ENCODE measurements at regions of chr1 and their contacts with region 1.

Region 1: GRCh38 chr1:26284597-26285360 is 4.9 kb downstream of the SH3BGRL3 start:
- DNase-seq: peak; percentile 99 to 100 (median 99)
- H3K4me3 ChIP-seq: peak overlapping the region in 3 of 7 experiments; percentile 7 to 19 (median 10)
- H3K27ac ChIP-seq: peak overlapping the region; percentile 91 to 92
- H3K4me1 ChIP-seq: peaks cover 19 to 98% (median 96%) of the 10 kb centered on the region in 4 experiments
- H3K27me3 ChIP-seq: no peaks in the 10 kb centered on the region

Region 2: DNA sequence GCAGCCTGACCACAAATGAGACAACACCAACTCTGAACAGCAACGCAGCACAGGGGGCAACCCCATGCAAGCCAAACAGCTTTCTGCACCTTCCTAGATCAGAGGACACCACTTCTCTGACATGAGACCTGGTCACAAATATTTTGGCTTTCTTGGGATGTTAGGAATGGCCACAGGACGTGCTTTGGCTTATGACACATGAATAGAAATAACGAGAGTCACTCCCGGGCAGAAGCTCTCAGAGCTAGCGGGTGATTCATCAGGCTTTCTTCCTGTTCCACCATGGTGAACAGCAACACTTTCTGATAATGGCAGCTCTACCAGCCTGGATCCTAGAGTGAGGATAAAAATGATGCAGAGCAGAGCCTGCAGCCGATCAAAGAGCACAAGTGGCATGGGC is 326.3 kb before region 1 on chr1:
- CTCF ChIA-PET with region 1: no interaction called
- POLR2A ChIA-PET with region 1: no interaction called
- DNase-seq: no peak
- H3K4me3 ChIP-seq: no peak overlapping the region
- H3K27ac ChIP-seq: no peak overlapping the region
- H3K4me1 ChIP-seq: peaks cover 0 to 4% (median 0%) of the 10 kb centered on the region in 4 experiments
- H3K27me3 ChIP-seq: no peaks in the 10 kb centered on the region

Region 3: GRCh38 chr1:26126321-26127084 is 158.3 kb before region 1 on chr1:
- CTCF ChIA-PET with region 1: no interaction called
- POLR2A ChIA-PET with region 1: no interaction called
- DNase-seq: peak; percentile 92 to 99 (median 97)
- H3K4me3 ChIP-seq: peak overlapping the region in 5 of 7 experiments; percentile 27 to 71 (median 48)
- H3K27ac ChIP-seq: peak overlapping the region; percentile 93 to 97
- H3K4me1 ChIP-seq: peaks cover 45 to 83% (median 64%) of the 10 kb centered on the region in 4 experiments
- H3K27me3 ChIP-seq: no peaks in the 10 kb centered on the region

Region 4: GRCh38 chr1:26164036-26164860 is 120.5 kb before region 1 on chr1:
- CTCF ChIA-PET with region 1: no interaction called
- POLR2A ChIA-PET with region 1: no interaction called
- DNase-seq: peak; percentile 40 to 55 (median 54)
- H3K4me3 ChIP-seq: peak overlapping the region in 6 of 7 experiments; percentile 31 to 71 (median 50)
- H3K27ac ChIP-seq: no peak overlapping the region
- H3K4me1 ChIP-seq: peaks cover 0 to 43% (median 28%) of the 10 kb centered on the region in 4 experiments
- H3K27me3 ChIP-seq: peaks cover 0 to 22% (median 11%) of the 10 kb centered on the region in 5 experiments

Region 5: GRCh38 chr1:26254404-26254803 is 30.4 kb before region 1 on chr1:
- CTCF ChIA-PET with region 1: no interaction called
- POLR2A ChIA-PET with region 1: no interaction called
- DNase-seq: no peak
- H3K4me3 ChIP-seq: no peak overlapping the region
- H3K27ac ChIP-seq: peak overlapping the region in 1 of 2 experiments; percentile 17
- H3K4me1 ChIP-seq: peaks cover under 1 to 7% (median 4%) of the 10 kb centered on the region in 4 experiments
- H3K27me3 ChIP-seq: no peaks in the 10 kb centered on the region

Region 6: DNA sequence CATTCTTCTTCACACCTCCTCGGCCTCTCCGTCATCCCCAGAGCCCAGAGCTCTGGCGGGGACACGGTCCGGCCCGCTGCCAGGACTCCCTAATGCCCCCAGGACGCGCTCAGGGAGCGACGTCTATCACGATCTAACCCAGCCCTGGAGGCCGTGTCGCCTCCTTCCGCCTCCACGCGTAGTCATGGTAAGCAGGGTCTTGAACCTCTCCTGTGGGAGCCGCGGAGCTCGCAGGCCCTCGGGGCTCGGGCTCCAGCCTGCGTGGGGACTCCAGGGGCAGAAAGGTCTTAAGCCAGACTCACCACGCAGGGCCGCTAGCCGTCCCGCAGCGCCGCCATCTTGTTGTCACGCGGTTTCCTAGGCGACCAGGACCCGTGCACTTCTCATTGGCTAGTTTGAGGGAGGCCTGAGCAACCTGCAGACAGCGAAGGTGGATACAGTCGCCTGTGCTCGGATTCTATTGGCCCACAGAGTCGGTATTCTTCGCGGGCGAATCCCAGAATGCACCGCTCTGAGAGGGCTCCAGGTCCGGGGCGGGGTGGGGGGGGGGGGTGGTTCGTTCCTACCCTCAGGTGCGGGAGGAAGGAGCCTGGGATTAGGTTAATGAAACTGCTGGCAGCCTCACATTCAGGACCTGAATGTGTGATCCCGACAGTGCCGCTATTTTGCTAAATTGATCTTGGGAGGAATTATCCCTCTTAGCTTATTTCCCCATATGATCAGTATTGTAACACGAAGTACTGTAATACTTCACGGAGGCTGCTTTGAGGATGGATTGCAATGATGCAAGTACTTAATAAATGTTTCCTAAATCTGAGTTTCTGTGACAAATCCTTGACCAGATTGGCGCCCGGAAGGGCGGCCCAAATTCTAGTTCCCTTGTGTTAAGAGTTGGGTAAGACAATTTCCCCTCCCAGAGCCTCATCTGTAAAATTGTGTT is 21.8 kb after region 1 on chr1 and contains the start of gene UBXN11:
- CTCF ChIA-PET with region 1: interaction called, 26 read pairs
- POLR2A ChIA-PET with region 1: interaction called, 4 read pairs
- DNase-seq: peak; percentile 94 to 97 (median 96)
- H3K4me3 ChIP-seq: peak within 1 kb of the TSS; percentile 69 to 98 (median 90)
- H3K27ac ChIP-seq: peak within 1 kb of the TSS; percentile 75 to 91
- H3K4me1 ChIP-seq: peaks cover 14 to 33% (median 26%) of the 10 kb centered on the region in 4 experiments
- H3K27me3 ChIP-seq: no peaks in the 10 kb centered on the region

Region 7: GRCh38 chr1:26321315-26322041 is 36.7 kb after region 1 on chr1:
- CTCF ChIA-PET with region 1: interaction called, 161 read pairs
- POLR2A ChIA-PET with region 1: interaction called, 28 read pairs
- DNase-seq: peak; percentile 87 to 92 (median 88)
- H3K4me3 ChIP-seq: peak overlapping the region in 1 of 7 experiments; percentile 11
- H3K27ac ChIP-seq: peak overlapping the region in 1 of 2 experiments; percentile 9
- H3K4me1 ChIP-seq: peaks cover 6 to 52% (median 47%) of the 10 kb centered on the region in 4 experiments
- H3K27me3 ChIP-seq: no peaks in the 10 kb centered on the region